Left colon (tissue), 2 donors: ENCODE measurements at regions of chr11 and their contacts with region 1.

Region 1: GRCh38 chr11:93234602-93235207 is 36.9 kb upstream of the SLC36A4 start:
- DNase-seq: peak; percentile 65 to 85
- ATAC-seq: peak; percentile 84

Region 2: GRCh38 chr11:92941676-92942571 is 292.8 kb before region 1 on chr11:
- intact Hi-C with region 1: loop called in 1 of 2 experiments (anchors 5 kb)
- DNase-seq: no peak
- ATAC-seq: peak; percentile 67

Region 3: DNA sequence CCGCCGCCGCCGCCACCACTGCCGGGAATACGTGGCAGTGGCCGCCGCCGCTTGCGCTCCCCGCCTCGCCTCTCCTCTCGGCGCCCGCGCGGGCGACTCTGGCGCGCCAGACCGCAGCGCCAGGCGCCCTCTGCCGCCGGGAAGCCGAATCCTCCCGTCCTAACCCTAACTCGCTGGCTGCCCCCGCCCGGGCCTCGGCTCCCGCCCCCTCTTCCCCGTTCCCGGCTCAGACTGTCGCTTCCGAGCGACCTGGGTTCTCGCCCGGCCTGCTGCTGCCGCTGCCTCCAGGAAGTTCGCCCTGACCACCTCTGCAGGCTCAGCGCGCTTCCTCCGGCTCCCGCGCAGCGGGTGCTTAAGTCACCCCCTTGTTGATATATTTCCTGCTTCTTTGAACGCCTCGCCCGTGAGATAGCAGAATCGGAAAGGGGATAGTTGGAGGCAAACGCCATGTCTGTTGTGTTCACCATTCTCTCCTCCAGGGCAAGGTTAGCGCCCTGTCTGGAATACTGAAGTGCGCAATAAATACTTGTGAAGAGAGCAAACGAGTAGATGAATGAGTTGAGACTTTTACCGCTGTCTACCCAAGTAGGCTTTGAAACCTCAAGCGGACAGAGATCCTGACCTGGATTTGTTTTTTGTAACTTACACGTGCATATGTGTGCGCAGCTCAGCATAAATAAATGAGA is 308.7 kb after region 1 on chr11 and contains the start of gene SMCO4:
- intact Hi-C with region 1: loop called in 1 of 2 experiments (anchors 5 kb)
- DNase-seq: peak; percentile 85 to 91
- ATAC-seq: peak; percentile 92
- total RNA-seq, gene SMCO4: 56.8 to 74.8 TPM

Region 4: GRCh38 chr11:93652161-93652597 is 417.5 kb after region 1 on chr11:
- intact Hi-C with region 1: loop called (anchors 5 to 10 kb)
- DNase-seq: no peak
- ATAC-seq: no peak